Transverse colon (tissue), 4 donors: ENCODE measurements at regions of chr12 and their contacts with region 1.

Region 1: DNA sequence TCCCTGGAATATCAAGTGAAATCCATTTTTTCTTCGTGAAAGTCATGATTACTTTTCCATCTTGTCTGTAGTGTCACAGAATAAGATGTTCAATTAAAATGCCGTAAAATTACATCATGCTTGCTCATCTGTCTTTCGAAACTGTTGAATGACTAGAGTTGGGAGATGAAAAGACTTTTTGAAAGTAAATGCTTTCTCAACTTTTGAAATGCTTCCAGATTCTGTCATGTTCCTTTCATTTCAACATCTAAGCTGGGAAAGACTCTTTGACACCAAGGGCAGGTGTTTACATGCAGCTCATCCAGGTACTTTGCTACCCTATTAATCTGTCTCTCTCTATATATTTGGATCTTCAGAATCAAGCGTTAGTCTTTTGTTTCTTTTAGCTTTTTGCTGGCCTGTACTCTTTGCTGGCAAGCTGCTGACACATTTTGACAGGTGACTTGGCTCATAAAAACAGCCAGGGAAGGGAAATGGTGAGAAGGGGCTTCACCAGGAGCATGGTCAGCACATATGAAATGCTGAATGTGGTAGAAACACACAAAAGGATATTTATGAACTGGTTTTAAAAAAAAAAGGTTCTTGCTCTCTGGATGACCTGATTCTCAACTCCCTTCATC is 77.0 kb upstream of the METAP2 start:
- DNase-seq: no peak
- H3K4me3 ChIP-seq: no peak overlapping the region
- H3K27ac ChIP-seq: peak overlapping the region in 1 of 4 donors; percentile 49
- H3K4me1 ChIP-seq: no peaks in the 10 kb centered on the region
- H3K27me3 ChIP-seq: no peaks in the 10 kb centered on the region
- CTCF ChIP-seq: no peak
- EP300 ChIP-seq: no peak
- POLR2A ChIP-seq: no peak

Region 2: DNA sequence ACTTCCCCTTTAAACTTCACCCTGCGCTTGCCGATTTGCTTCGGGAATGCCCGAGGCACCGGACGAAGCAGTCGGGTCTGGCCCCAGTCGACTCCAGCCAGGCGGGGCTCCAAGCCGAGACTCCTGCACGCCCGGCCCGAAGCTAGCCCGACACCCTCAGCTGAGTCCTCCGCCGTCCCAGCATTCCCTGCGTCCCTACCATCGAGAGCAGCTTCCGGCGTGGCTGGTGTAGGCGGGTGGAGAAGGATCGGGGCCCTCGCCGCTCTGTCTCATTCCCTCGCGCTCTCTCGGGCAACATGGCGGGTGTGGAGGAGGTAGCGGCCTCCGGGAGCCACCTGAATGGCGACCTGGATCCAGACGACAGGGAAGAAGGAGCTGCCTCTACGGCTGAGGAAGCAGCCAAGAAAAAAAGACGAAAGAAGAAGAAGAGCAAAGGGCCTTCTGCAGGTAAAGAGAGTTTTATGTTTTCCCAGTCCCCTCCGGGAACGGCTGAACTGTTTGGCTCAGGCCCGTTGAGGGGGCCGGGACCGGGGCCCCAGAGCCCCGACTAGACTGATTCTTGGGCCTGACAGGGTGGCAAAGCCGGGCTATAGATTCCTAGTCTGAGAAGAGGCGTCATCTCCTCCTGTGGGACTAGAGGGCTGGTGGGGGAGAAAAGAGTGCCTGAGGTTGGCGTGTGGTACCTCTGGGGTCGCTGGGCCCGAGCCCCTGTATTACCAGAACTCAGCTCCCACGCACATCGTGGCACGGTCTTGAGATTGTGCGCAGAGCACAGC is 77.1 kb after region 1 on chr12 and contains the start of gene METAP2:
- in situ Hi-C with region 1: no loop called
- intact Hi-C with region 1: loop called (anchors 5 kb)
- DNase-seq: peak; percentile 96
- H3K4me3 ChIP-seq: peak within 1 kb of the TSS; percentile 61 to 99 (median 91)
- H3K27ac ChIP-seq: peak within 1 kb of the TSS; percentile 89 to 98 (median 92)
- H3K4me1 ChIP-seq: peaks cover 9 to 26% (median 12%) of the 10 kb centered on the region in 4 donors
- H3K27me3 ChIP-seq: no peaks in the 10 kb centered on the region
- CTCF ChIP-seq: no peak
- EP300 ChIP-seq: no peak
- POLR2A ChIP-seq: peak; percentile 96
- total RNA-seq, gene METAP2: 5.2 to 59.7 (median 42.7) TPM